Esophagus muscularis mucosa (tissue), 4 donors: ENCODE measurements at regions of chr1 and their contacts with region 1.

Region 1: DNA sequence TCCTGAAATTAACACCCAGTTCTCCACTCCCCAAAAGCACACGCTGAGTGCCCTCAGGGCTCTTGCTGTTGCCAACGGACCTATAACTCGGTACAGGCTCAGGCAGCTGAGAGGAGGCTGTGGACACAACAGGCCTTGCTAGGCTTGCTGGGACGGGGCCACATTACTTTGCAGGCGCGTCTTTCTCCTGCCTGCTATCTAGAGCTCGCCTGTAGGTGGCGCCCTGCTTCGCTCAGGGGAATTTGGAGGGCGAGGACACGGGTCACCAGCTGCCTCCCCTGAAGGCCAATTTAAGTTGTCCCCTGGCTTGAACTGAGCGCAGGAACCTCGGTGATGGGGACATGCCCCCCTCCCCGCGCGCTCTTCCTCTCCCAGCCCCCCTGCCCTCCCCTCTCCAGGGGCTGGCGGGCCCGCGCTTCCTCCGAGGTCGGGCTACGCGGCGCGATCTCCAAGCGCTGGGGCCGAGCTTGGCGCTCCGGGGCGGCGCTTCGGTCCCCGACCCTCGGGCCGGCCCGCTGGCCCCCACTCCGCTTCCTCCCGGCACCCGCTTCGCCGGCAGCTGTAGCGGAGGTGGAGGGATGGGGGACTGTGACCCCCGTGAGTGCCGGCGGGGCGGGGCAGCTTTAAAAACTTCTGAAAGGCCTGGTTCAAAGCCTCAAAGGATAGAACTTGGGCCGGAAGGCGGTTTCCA is 32.4 kb upstream of the NFIA start:
- DNase-seq: peak; percentile 99
- H3K4me3 ChIP-seq: peak overlapping the region; percentile 74 to 91 (median 84)
- H3K27ac ChIP-seq: peak overlapping the region; percentile 93 to 99 (median 98)
- H3K4me1 ChIP-seq: peaks cover 31 to 47% (median 47%) of the 10 kb centered on the region in 4 donors
- H3K27me3 ChIP-seq: no peaks in the 10 kb centered on the region
- CTCF ChIP-seq: peak; percentile 95 to 99 (median 99)
- EP300 ChIP-seq: no peak
- POLR2A ChIP-seq: no peak

Region 2: GRCh38 chr1:61184040-61184713 is 134.2 kb after region 1 on chr1:
- intact Hi-C with region 1: loop called (anchors 10 kb)
- DNase-seq: peak; percentile 97
- H3K4me3 ChIP-seq: peak overlapping the region; percentile 43 to 51 (median 48)
- H3K27ac ChIP-seq: peak overlapping the region; percentile 78 to 86 (median 81)
- H3K4me1 ChIP-seq: peaks cover 62 to 92% (median 84%) of the 10 kb centered on the region in 4 donors
- H3K27me3 ChIP-seq: no peaks in the 10 kb centered on the region
- CTCF ChIP-seq: no peak
- EP300 ChIP-seq: no peak
- POLR2A ChIP-seq: no peak

Region 3: DNA sequence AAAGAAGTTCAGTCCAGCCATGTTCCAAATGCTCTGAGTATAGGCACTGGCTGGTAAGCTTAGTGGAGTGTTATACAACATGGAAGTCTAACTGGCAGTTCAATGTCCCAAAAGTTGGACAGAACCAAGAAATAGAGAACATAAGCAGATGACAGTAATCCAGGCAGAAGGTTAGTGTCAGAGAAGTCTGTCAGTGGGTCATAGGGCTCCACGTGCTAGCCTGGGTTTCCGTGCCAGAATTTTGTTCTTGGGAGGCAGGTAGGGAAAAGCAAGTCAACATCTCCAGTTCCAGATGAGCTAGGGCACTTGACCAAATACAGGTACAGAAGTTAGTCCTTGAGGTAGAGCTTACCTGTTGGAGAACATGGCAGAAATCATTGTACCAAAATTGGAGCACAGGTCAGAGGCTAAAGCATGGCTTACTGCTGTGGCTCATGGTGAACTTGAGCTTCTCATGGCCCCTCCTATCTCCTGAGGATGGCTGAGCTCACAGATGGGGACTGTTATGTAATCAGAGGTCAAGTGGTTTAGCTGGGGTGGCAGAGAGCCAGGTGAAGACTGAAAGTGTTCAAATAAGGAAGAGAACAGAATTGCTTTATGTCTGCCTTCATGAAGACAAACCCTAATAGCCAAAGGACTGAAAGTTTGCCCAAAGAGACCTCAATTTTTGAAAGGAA is 203.2 kb after region 1 on chr1:
- intact Hi-C with region 1: loop called (anchors 10 kb)
- DNase-seq: peak; percentile 95
- H3K4me3 ChIP-seq: no peak overlapping the region
- H3K27ac ChIP-seq: peak overlapping the region; percentile 74 to 82 (median 76)
- H3K4me1 ChIP-seq: peaks cover 57 to 99% (median 90%) of the 10 kb centered on the region in 4 donors
- H3K27me3 ChIP-seq: no peaks in the 10 kb centered on the region
- CTCF ChIP-seq: no peak
- EP300 ChIP-seq: no peak
- POLR2A ChIP-seq: no peak

Region 4: GRCh38 chr1:61337981-61338848 is 288.2 kb after region 1 on chr1:
- intact Hi-C with region 1: loop called (anchors 2 kb)
- DNase-seq: no peak
- H3K4me3 ChIP-seq: peak overlapping the region; percentile 15 to 37 (median 26)
- H3K27ac ChIP-seq: peak overlapping the region; percentile 73 to 82 (median 78)
- H3K4me1 ChIP-seq: peaks cover 35 to 57% (median 50%) of the 10 kb centered on the region in 4 donors
- H3K27me3 ChIP-seq: no peaks in the 10 kb centered on the region
- CTCF ChIP-seq: peak; percentile 71 to 75 (median 74)
- EP300 ChIP-seq: no peak
- POLR2A ChIP-seq: no peak

Region 5: GRCh38 chr1:61641578-61642336 is 591.8 kb after region 1 on chr1:
- intact Hi-C with region 1: loop called (anchors 5 kb)
- DNase-seq: peak; percentile 95
- H3K4me3 ChIP-seq: peak overlapping the region; percentile 17 to 47 (median 34)
- H3K27ac ChIP-seq: peak overlapping the region; percentile 76 to 85 (median 79)
- H3K4me1 ChIP-seq: peaks cover 15 to 60% (median 51%) of the 10 kb centered on the region in 4 donors
- H3K27me3 ChIP-seq: peaks cover 0 to 3% (median 0%) of the 10 kb centered on the region in 4 donors
- CTCF ChIP-seq: peak; percentile 70 to 84 (median 70)
- EP300 ChIP-seq: no peak
- POLR2A ChIP-seq: no peak